HEK293T (cell line): ENCODE measurements at regions of chr13 and their contacts with region 1.

Region 1: GRCh38 chr13:76991796-76992547 is at the start of gene CLN5:
- DNase-seq: peak; percentile 100

Region 2: GRCh38 chr13:76980075-76980718 is 11.8 kb before region 1 on chr13:
- CTCF ChIA-PET with region 1: interaction called, 20 read pairs
- POLR2A ChIA-PET with region 1: interaction called, 11 read pairs
- DNase-seq: peak; percentile 100

Region 3: GRCh38 chr13:77002590-77003190 is 10.7 kb after region 1 on chr13:
- CTCF ChIA-PET with region 1: interaction called, 15 read pairs
- POLR2A ChIA-PET with region 1: interaction called, 10 read pairs
- DNase-seq: peak; percentile 68